ENCODE measurements at regions of chr5 and their contacts with region 1.

Region 1: GRCh38 chr5:77143998-77144836 is 57.1 kb upstream of the ZBED3 start:
- DNase-seq: peak; percentile 81
- ATAC-seq: peak; percentile 66
- H3K4me3 Mint-ChIP-seq: no peak overlapping the region
- H3K27ac Mint-ChIP-seq: no peak overlapping the region
- H3K4me1 Mint-ChIP-seq: peaks cover 11% of the 10 kb centered on the region
- H3K27me3 Mint-ChIP-seq: peaks cover 6% of the 10 kb centered on the region

Region 2: DNA sequence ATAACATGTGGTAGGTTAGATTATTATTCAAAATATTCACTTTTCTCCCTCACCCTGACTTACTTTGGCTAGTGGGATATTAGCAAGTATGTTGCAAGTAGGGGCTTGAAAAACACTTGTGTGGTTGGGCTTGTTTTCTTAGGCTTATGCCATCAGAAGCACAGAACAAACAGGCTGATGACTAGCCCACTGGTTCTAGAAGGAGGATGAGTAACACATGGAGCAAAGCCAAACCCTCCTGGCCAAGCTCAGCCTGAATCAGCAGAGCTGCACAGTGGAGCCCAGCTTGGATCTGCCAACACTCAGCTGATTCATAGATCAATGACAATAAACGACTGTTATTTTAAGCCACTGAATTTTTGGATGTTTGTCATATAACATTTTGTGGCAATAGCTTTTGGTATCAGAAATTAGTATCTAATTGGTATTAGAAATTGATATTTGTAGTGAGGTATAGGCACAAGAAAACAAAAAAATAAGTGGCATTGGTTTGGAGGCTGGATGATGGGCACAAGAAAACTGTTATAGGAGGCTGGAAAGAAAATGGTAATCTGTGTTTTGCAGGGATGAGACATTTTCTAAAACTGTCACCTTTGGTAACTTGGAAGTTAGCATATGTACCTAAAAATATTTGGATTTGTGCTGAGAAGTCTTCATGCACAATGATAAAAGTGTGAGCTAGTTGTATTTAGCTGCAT is 11.0 kb before region 1 on chr5:
- CTCF ChIA-PET with region 1: interaction called, 26 read pairs
- POLR2A ChIA-PET with region 1: no interaction called
- intact Hi-C with region 1: no loop called
- DNase-seq: no peak
- ATAC-seq: no peak
- H3K4me3 Mint-ChIP-seq: no peak overlapping the region
- H3K27ac Mint-ChIP-seq: no peak overlapping the region
- H3K4me1 Mint-ChIP-seq: no peaks in the 10 kb centered on the region
- H3K27me3 Mint-ChIP-seq: no peaks in the 10 kb centered on the region

Region 3: DNA sequence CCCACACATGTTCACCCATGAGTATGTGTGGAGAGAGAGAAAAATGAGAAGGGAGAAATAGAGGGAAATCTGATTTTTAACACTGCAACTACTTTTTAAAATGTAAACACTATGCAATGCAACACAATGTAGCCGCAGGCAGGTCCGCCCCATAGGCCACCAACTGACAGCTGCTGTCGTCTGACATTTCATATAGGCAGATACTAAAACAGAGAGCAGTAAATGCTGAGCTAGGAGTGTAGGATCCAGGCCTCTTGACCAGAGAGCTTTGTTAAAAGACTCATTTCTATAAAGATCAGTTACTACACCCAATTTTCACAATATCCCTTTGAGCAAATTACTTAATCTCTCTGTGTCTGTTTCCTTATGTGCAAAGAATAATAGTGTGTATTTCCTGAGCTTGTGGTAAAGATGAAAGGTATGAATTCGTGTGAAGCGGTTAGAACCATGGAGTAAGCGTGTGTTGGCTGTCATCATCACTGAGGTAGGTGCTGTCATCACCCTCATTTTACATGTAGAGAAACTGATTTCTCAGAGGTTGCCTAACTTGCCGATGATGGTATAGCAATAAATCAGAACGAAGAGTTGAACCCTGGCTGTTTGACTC is 11.1 kb after region 1 on chr5:
- CTCF ChIA-PET with region 1: interaction called, 16 read pairs
- POLR2A ChIA-PET with region 1: no interaction called
- intact Hi-C with region 1: no loop called
- DNase-seq: peak; percentile 45
- ATAC-seq: peak; percentile 96
- H3K4me3 Mint-ChIP-seq: no peak overlapping the region
- H3K27ac Mint-ChIP-seq: no peak overlapping the region
- H3K4me1 Mint-ChIP-seq: peaks cover 25% of the 10 kb centered on the region
- H3K27me3 Mint-ChIP-seq: no peaks in the 10 kb centered on the region

Region 4: GRCh38 chr5:77239126-77239741 is 95.0 kb after region 1 on chr5:
- CTCF ChIA-PET with region 1: no interaction called
- POLR2A ChIA-PET with region 1: no interaction called
- intact Hi-C with region 1: loop called in 1 of 2 experiments (anchors 5 kb)
- DNase-seq: peak; percentile 39
- ATAC-seq: no peak
- H3K4me3 Mint-ChIP-seq: no peak overlapping the region
- H3K27ac Mint-ChIP-seq: no peak overlapping the region
- H3K4me1 Mint-ChIP-seq: no peaks in the 10 kb centered on the region
- H3K27me3 Mint-ChIP-seq: peaks cover 15% of the 10 kb centered on the region

Region 5: DNA sequence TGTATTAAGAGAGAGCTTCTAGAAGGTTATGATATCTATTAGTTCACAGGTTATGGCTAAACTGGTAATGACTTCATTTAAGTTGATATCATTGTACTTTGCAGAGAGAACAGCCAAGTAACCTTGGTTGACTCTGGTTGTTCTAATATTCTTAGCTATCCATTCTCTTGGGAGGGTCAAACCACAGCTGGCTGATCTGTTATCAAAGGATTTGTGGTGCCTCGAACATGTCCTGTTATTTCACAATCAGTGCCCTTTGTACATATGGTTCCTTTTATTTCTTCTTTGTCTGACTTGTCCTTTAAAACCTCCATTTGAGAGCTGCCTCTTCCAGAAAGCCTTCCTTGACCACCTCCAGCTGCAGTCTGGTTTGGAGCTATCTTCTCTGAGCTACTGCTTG is 128.0 kb after region 1 on chr5:
- CTCF ChIA-PET with region 1: no interaction called
- POLR2A ChIA-PET with region 1: no interaction called
- intact Hi-C with region 1: no loop called
- DNase-seq: no peak
- ATAC-seq: no peak
- H3K4me3 Mint-ChIP-seq: no peak overlapping the region
- H3K27ac Mint-ChIP-seq: no peak overlapping the region
- H3K4me1 Mint-ChIP-seq: peaks cover under 1% of the 10 kb centered on the region
- H3K27me3 Mint-ChIP-seq: peaks cover 11% of the 10 kb centered on the region

Region 6: GRCh38 chr5:77437194-77437593 is 293.0 kb after region 1 on chr5:
- CTCF ChIA-PET with region 1: interaction called, 8 read pairs
- POLR2A ChIA-PET with region 1: no interaction called
- intact Hi-C with region 1: loop called (anchors 1 to 2 kb)
- DNase-seq: no peak
- ATAC-seq: no peak
- H3K4me3 Mint-ChIP-seq: no peak overlapping the region
- H3K27ac Mint-ChIP-seq: no peak overlapping the region
- H3K4me1 Mint-ChIP-seq: no peaks in the 10 kb centered on the region
- H3K27me3 Mint-ChIP-seq: no peaks in the 10 kb centered on the region